ENCODE measurements at regions of chr10 and their contacts with region 1.

Region 1: DNA sequence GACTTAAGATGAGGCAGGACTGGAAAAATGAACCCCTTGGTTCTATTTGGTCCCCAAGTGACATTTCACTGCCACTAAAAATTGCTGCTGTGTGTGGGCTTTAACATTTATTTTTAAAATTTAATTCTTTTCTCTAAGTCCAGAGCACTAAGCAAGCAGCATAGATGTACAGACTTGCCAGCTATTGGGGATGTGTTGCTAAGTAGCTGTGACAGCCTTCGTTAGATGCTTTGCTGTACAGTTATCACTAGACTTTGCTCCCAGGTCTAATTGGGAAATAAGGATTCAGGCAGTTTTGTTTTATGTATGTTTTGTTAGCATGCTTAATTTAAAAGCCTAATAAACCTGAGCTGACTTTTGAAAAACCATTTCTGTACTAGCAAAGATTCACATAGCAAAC is 51.8 kb downstream of the GBF1 start:
- DNase-seq: no peak
- ATAC-seq: no peak
- H3K4me3 Mint-ChIP-seq: no peak overlapping the region
- H3K27ac Mint-ChIP-seq: no peak overlapping the region
- H3K4me1 Mint-ChIP-seq: peaks cover 17% of the 10 kb centered on the region
- H3K27me3 Mint-ChIP-seq: no peaks in the 10 kb centered on the region

Region 2: DNA sequence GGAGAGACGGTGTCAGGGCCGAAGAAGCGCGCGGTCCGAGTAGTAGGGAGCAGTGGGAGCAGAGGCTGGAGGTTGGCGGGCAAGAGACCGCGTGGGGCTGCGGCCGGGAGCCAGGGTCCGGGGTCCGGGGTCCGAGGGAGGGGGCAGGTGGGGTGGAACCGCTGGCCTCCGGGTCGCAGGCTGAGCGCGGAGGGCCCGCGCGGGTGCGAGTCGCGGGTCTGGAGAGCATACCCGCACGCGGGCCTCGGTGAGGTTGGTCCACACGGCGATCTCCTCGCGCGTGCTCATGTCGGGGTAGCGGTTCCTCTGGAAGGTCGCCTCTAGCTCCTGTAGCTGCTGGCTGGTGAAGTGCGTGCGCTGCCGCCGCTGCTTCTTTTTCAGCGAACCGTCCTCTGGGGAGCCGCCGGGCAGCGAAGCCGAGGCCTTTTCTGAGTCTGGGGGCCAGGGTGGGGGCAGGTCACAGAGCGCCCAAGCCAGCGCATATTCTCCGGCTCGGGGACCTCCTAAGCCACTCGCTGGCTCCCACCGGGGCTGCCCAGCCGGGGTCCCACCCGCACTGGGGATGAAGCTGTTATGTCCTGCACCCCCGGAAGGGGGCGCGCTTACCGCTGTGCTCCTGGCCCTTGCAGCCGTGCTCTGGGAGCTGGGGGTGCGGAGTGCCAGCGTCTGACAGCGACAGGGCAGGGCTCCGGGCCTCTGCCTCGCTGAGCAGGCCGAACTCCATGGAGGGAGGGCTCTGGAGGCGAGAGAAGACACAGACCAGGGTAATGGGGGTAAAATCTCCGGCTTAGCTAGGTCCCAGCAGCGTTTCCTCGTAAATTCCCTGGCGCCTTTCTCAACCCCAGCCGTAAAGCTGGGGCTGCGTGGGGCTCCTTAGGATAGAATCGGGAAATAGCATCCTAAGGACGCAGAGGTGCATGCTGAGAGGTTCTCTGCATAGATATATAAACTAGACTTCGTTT is 65.5 kb before region 1 on chr10:
- CTCF ChIA-PET with region 1: interaction called, 11 read pairs
- POLR2A ChIA-PET with region 1: no interaction called
- DNase-seq: peak; percentile 80
- ATAC-seq: peak; percentile 70
- H3K4me3 Mint-ChIP-seq: peak overlapping the region; percentile 63
- H3K27ac Mint-ChIP-seq: no peak overlapping the region
- H3K4me1 Mint-ChIP-seq: peaks cover 21% of the 10 kb centered on the region
- H3K27me3 Mint-ChIP-seq: peaks cover 63% of the 10 kb centered on the region

Measured in activated CD8-positive, alpha-beta T cell treated with anti-CD3 and anti-CD28 coated beads, Interleukin-2, amount 10 ng/mL, durations not matched to agents 7 days and 5 days (primary cell).